WTC11 (cell line): ENCODE measurements at regions of chr13 and their contacts with region 1.

Region 1: GRCh38 chr13:24671386-24672107 is 8.7 kb upstream of the ATP12A start:
- DNase-seq: peak; percentile 35
- ATAC-seq: peak; percentile 84
- H3K4me3 Mint-ChIP-seq: peak overlapping the region; percentile 58
- H3K27ac Mint-ChIP-seq: no peak overlapping the region
- H3K4me1 Mint-ChIP-seq: peaks cover 15% of the 10 kb centered on the region
- H3K27me3 Mint-ChIP-seq: no peaks in the 10 kb centered on the region; the same call in 1 of the 2 replicates
- CTCF ChIP-seq: no peak; the same call in 1 of the 2 replicates

Region 2: DNA sequence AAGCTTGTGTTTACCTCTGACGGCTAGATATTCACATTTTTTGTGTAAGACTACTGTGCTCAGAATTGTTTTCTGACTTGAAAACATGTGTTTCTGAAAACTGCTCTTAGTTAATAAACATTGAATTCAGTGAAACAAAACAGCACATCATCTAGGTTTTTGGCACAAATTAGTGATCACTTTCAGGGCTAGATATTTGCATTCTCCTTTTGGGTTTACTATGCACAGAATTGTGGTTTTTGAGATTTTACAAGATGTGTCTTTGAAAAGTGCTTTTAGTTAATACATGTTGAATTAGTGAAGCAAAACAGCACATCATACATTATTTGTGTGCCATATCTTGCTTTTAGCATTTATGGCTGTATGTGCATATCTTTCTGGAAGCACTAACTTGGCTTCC is 150.8 kb before region 1 on chr13:
- CTCF ChIA-PET with region 1: no interaction called
- POLR2A ChIA-PET with region 1: no interaction called
- DNase-seq: no peak
- ATAC-seq: no peak
- H3K4me3 Mint-ChIP-seq: no peak overlapping the region
- H3K27ac Mint-ChIP-seq: no peak overlapping the region
- H3K4me1 Mint-ChIP-seq: no peaks in the 10 kb centered on the region
- H3K27me3 Mint-ChIP-seq: no peaks in the 10 kb centered on the region
- CTCF ChIP-seq: no peak

Region 3: DNA sequence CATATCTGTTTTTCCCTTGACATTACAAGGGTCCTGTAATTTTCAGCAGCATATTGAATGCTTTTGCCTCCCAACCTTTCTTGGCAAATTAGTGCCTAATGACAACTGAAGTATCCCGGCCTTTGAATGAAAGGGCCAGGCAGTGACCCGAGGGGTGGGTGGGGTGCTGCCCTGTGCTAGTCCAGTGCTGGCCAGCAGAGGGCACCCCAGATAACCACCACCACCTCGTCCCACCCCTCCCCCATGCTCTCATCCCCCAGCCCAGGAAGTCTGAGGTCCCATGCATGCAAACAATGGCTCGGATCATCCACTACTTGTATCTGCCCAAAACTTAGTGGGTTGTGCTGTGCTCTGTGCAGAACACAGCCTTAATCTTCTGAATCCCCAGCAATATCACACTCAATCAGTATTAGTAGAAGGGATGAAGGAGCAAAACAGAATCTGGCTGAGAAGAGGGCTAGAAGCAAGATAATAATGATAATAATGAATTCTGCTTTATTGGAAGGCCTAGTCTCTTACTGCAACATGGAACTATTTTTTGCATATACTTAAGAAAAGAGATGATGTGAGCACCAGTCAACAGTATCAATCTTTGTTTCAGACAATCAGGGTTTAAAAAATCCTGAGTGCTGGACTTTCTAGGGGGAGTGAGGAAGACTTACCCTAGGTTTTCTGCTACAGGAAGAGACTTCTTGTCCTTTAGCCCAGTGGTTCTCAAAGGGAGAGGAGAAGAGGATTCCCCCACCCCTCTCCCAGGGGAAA is 12.5 kb after region 1 on chr13:
- CTCF ChIA-PET with region 1: interaction called, 13 read pairs
- POLR2A ChIA-PET with region 1: interaction called, 5 read pairs
- DNase-seq: peak; percentile 84
- ATAC-seq: peak; percentile 78
- H3K4me3 Mint-ChIP-seq: no peak overlapping the region; the same call in 1 of the 2 replicates
- H3K27ac Mint-ChIP-seq: no peak overlapping the region
- H3K4me1 Mint-ChIP-seq: peaks cover 61% of the 10 kb centered on the region
- H3K27me3 Mint-ChIP-seq: peaks cover 25% of the 10 kb centered on the region
- CTCF ChIP-seq: peak; percentile 85

Region 4: DNA sequence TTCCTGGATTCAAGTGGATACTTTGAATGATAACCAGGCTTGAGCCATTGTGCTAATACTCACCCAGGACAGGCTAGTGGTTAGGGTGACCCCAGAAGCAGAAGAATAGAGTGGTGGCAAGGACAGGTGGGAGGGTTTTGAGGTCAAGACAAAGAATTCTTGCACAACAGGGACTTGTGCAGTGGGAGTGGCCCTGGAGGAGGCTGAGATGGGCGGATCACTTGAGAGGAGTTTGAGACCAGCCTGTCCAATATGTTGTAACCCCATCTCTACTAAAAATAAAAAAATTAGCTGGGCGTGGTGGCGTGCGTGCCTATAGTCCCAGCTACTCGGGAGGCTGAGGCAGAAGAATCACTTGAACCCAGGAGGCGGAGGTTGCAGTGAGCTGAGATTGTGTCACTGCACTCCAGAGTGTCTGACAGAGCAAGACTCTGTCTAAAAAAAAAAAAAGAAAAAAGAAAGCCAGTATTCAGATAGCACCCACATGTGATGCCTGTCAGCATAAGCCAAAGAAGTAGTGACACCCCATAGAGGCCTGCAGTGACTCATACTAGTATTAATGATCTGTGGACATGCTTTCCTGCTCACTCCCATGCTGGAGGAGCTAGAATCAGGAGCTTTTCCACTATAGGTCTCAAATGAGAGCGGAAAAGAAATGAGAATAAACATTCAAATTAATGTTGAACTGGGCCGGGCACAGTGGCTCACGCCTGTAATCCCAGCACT is 171.2 kb after region 1 on chr13:
- CTCF ChIA-PET with region 1: no interaction called
- POLR2A ChIA-PET with region 1: no interaction called
- DNase-seq: no peak
- ATAC-seq: no peak
- H3K4me3 Mint-ChIP-seq: no peak overlapping the region
- H3K27ac Mint-ChIP-seq: no peak overlapping the region
- H3K4me1 Mint-ChIP-seq: peaks cover 11% of the 10 kb centered on the region
- H3K27me3 Mint-ChIP-seq: peaks cover 13% of the 10 kb centered on the region
- CTCF ChIP-seq: no peak